Dorsolateral prefrontal cortex (tissue), 120 donors: ENCODE measurements at regions of chr3 and their contacts with region 1.

Region 1: GRCh38 chr3:33440323-33441232 is at the start of gene UBP1:
- DNase-seq: peak; percentile 97 to 100 (median 99)
- H3K4me3 ChIP-seq: peak within 1 kb of the TSS; percentile 54 to 100 (median 88)
- H3K27ac ChIP-seq: peak within 1 kb of the TSS; percentile 85 to 100 (median 96)
- H3K27me3 ChIP-seq: no peaks in the 10 kb centered on the region
- CTCF ChIP-seq: peak in 21 of 56 donors; percentile 5 to 44 (median 18)
- total RNA-seq, gene UBP1: 32.8 to 113 (median 70.5) TPM

Region 2: DNA sequence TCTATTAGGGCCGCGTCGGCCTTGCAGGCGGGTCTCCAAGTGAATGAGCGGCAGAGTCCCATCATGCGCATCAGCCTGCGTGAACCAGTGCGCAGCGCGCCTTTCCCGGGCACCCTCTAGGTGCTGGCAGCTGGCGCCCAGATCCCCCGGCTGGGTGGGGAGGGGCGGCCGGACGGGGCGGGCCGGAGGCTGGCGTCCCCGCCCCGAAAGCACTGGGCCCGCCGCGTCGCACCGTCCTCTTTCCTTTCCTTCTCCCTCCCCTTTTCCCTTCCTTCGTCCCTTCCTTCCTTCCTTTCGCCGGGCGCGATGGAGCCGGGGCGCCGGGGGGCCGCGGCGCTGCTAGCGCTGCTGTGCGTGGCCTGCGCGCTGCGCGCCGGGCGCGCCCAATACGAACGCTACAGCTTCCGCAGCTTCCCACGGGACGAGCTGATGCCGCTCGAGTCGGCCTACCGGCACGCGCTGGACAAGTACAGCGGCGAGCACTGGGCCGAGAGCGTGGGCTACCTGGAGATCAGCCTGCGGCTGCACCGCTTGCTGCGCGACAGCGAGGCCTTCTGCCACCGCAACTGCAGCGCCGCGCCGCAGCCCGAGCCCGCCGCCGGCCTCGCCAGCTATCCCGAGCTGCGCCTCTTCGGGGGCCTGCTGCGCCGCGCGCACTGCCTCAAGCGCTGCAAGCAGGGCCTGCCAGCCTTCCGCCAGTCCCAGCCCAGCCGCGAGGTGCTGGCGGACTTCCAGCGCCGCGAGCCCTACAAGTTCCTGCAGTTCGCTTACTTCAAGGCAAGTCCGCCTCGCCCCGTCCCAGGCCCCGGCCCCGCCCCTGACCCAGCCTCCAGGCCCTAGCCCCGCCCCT is 326.6 kb before region 1 on chr3 and contains the start of gene CRTAP:
- intact Hi-C with region 1: loop called in 1 of 2 experiments (anchors 5 kb)
- DNase-seq: peak; percentile 82 to 94 (median 90)
- H3K4me3 ChIP-seq: peak within 1 kb of the TSS; percentile 56 to 91 (median 80)
- H3K27ac ChIP-seq: peak within 1 kb of the TSS; percentile 73 to 99 (median 95)
- H3K27me3 ChIP-seq: no peaks in the 10 kb centered on the region
- CTCF ChIP-seq: peak in 18 of 56 donors; percentile 6 to 33 (median 18)
- total RNA-seq, gene CRTAP: 49.8 to 139 (median 75.7) TPM

Region 3: GRCh38 chr3:33372218-33373081 is 68.1 kb before region 1 on chr3:
- intact Hi-C with region 1: loop called in 1 of 2 experiments (anchors 5 kb)
- DNase-seq: peak in 3 of 10 donors; percentile 34 to 62 (median 44)
- H3K4me3 ChIP-seq: peak overlapping the region in 17 of 59 donors; percentile 1 to 49 (median 9)
- H3K27ac ChIP-seq: peak overlapping the region in 2 of 59 donors; percentile 4 to 14
- H3K27me3 ChIP-seq: no peaks in the 10 kb centered on the region
- CTCF ChIP-seq: peak; percentile 78 to 98 (median 91)

Region 4: GRCh38 chr3:33383951-33384350 is 56.6 kb before region 1 on chr3:
- intact Hi-C with region 1: no loop called
- DNase-seq: no peak
- H3K4me3 ChIP-seq: no peak overlapping the region
- H3K27ac ChIP-seq: peak overlapping the region in 6 of 59 donors; percentile 5 to 45 (median 27)
- H3K27me3 ChIP-seq: no peaks in the 10 kb centered on the region
- CTCF ChIP-seq: no peak

Region 5: GRCh38 chr3:33636125-33636850 is 195.7 kb after region 1 on chr3:
- intact Hi-C with region 1: loop called in 1 of 2 experiments (anchors 10 kb)
- DNase-seq: no peak
- H3K4me3 ChIP-seq: peak overlapping the region in 8 of 59 donors; percentile 1 to 20 (median 7)
- H3K27ac ChIP-seq: peak overlapping the region in 41 of 59 donors; percentile 7 to 76 (median 50)
- H3K27me3 ChIP-seq: no peaks in the 10 kb centered on the region
- CTCF ChIP-seq: peak; percentile 59 to 90 (median 74)

Region 6: GRCh38 chr3:33658991-33659848 is 218.6 kb after region 1 on chr3:
- intact Hi-C with region 1: loop called in 1 of 2 experiments (anchors 1 kb)
- DNase-seq: peak; percentile 85 to 97 (median 94)
- H3K4me3 ChIP-seq: peak overlapping the region; percentile 37 to 90 (median 77)
- H3K27ac ChIP-seq: peak overlapping the region; percentile 67 to 100 (median 98)
- H3K27me3 ChIP-seq: no peaks in the 10 kb centered on the region
- CTCF ChIP-seq: peak in 33 of 56 donors; percentile 6 to 34 (median 19)

Region 7: GRCh38 chr3:33717866-33718594 is 277.5 kb after region 1 on chr3 and contains the start of gene CLASP2:
- intact Hi-C with region 1: loop called in 1 of 2 experiments (anchors 5 kb)
- DNase-seq: peak; percentile 62 to 92 (median 78)
- H3K4me3 ChIP-seq: peak within 1 kb of the TSS; percentile 58 to 98 (median 89)
- H3K27ac ChIP-seq: peak within 1 kb of the TSS in 58 of 59 donors; percentile 36 to 96 (median 86)
- H3K27me3 ChIP-seq: no peaks in the 10 kb centered on the region
- CTCF ChIP-seq: peak in 21 of 56 donors; percentile 1 to 40 (median 21)
- total RNA-seq, gene CLASP2: 160 to 469 (median 336) TPM